Natural killer cell (primary cell): ENCODE measurements at regions of chr14 and their contacts with region 1.

Region 1: DNA sequence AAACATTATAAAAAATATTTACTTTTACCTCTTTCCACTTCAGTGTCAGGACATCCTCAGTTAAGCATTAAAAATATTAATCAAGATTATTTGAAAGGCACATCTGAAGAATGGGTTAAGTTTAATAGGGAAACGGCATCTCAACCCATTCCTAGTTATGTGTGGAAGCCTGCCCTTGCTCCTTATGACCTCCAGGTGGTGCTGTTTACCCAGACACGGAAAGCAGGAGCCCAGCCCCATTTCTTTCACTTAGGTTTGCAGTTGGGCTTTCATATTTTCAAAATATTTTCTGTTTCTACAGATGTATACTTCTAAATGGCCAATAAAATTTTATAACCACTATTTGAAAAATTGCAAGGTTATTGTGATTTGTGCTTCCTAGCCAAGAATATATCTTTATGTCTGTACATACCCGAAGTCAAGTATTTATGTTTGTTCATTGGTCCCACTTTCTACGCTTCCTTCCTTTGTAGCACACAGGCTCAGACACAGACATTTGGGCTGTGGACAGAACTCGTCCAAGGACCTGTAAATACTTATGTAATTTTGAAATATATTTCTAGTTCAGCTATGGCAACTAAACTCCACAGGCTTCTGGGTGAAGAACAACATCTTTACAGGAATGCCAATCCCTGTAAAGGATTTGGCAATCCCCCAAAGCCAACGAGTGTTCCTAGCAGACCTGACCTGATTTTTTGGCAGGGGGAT is 247.1 kb downstream of the AKAP6 start:
- DNase-seq: peak in 1 of 2 donors; percentile 71
- ATAC-seq: peak in 2 of 3 donors; percentile 60 to 81
- H3K4me3 ChIP-seq: no peak overlapping the region
- H3K4me3 Mint-ChIP-seq: no peak overlapping the region
- H3K27ac ChIP-seq: no peak overlapping the region
- H3K27ac Mint-ChIP-seq: no peak overlapping the region
- H3K4me1 ChIP-seq: no peaks in the 10 kb centered on the region
- H3K4me1 Mint-ChIP-seq: no peaks in the 10 kb centered on the region
- H3K27me3 ChIP-seq: no peaks in the 10 kb centered on the region
- H3K27me3 Mint-ChIP-seq: no peaks in the 10 kb centered on the region
- CTCF ChIP-seq: peak; percentile 78

Region 2: DNA sequence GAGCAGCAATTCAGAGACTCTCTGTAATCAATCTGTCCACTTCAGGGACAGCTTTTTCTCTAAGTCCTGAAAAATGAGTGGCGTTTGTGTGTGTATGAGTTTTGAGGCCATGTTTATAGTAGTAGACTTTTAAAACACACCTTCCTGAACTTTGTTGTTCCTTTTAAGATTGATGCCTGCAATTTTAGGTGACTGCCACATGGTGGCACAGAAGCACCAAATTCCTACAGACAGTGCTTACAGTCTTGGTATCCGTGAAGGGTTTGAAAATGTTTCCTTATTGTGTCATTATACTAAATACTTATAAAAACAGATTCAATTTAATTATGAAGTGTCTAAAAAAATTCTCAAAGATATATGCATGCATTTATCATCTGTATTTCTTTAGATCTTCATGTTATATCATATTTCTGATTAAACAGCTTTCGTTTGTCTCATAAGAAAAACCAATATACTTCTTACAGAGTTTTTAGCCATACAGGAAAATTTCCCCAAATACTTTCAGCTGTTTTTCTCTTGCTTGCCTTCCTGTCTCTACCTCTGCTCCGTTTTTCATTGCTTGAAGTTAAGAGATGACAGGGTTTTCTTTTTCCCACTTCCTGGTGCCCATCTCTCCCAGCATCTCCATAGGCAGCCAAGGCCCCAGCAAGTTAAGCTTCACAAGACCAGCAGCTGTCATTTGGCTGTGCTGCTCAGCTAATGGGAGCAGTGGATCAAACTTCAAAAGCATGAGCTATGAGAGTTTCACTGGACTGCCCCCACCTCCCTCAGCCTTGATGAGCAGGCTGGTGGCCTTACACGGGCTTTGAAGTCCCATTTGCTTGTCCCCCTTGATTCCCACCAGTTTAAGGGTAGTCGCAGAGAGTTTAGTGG is 12.4 kb after region 1 on chr14:
- intact Hi-C with region 1: no loop called
- DNase-seq: no peak
- ATAC-seq: no peak
- H3K4me3 ChIP-seq: no peak overlapping the region
- H3K4me3 Mint-ChIP-seq: no peak overlapping the region
- H3K27ac ChIP-seq: no peak overlapping the region
- H3K27ac Mint-ChIP-seq: no peak overlapping the region
- H3K4me1 ChIP-seq: no peaks in the 10 kb centered on the region
- H3K4me1 Mint-ChIP-seq: no peaks in the 10 kb centered on the region
- H3K27me3 ChIP-seq: no peaks in the 10 kb centered on the region
- H3K27me3 Mint-ChIP-seq: peaks cover 0 to 4% of the 10 kb centered on the region in 2 donors
- CTCF ChIP-seq: no peak

Region 3: DNA sequence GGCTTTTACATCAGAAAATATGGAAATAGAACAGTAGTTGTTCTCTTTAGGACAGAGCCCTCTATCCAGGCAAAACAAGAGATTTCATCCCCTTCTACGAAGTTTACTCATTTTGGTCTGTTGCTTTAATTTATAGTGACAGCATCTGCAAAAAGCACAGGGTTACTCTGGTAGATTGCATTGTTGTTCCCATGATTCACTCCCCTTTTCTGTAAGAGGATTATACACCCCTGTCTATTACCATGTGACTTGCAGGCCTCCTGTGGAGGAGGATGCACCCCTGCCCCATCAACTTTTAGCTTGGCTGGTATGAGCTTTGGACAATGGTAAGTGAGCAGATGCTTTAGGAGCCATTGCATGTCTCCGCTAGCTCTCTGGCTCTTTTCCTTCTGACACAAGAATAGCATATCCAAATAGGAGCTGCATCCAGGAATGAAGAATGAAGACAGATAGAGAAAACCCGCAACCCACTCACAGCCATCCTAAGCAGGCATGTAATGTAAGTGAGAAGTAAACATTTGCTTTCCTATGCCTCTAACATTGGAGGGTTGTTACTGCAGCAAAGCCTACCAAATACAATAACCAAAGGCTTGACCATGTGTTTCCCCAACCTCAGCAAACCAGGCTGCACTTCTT is 57.1 kb after region 1 on chr14:
- intact Hi-C with region 1: no loop called
- DNase-seq: no peak
- ATAC-seq: no peak
- H3K4me3 ChIP-seq: no peak overlapping the region
- H3K4me3 Mint-ChIP-seq: no peak overlapping the region
- H3K27ac ChIP-seq: no peak overlapping the region
- H3K27ac Mint-ChIP-seq: no peak overlapping the region
- H3K4me1 ChIP-seq: no peaks in the 10 kb centered on the region
- H3K4me1 Mint-ChIP-seq: no peaks in the 10 kb centered on the region
- H3K27me3 ChIP-seq: no peaks in the 10 kb centered on the region
- H3K27me3 Mint-ChIP-seq: no peaks in the 10 kb centered on the region
- CTCF ChIP-seq: no peak

Region 4: GRCh38 chr14:33229269-33229929 is 653.2 kb after region 1 on chr14:
- intact Hi-C with region 1: no loop called
- DNase-seq: no peak
- ATAC-seq: no peak
- H3K4me3 ChIP-seq: no peak overlapping the region
- H3K4me3 Mint-ChIP-seq: no peak overlapping the region
- H3K27ac ChIP-seq: no peak overlapping the region
- H3K27ac Mint-ChIP-seq: no peak overlapping the region
- H3K4me1 ChIP-seq: no peaks in the 10 kb centered on the region
- H3K4me1 Mint-ChIP-seq: no peaks in the 10 kb centered on the region
- H3K27me3 ChIP-seq: no peaks in the 10 kb centered on the region
- H3K27me3 Mint-ChIP-seq: no peaks in the 10 kb centered on the region
- CTCF ChIP-seq: no peak

Region 5: DNA sequence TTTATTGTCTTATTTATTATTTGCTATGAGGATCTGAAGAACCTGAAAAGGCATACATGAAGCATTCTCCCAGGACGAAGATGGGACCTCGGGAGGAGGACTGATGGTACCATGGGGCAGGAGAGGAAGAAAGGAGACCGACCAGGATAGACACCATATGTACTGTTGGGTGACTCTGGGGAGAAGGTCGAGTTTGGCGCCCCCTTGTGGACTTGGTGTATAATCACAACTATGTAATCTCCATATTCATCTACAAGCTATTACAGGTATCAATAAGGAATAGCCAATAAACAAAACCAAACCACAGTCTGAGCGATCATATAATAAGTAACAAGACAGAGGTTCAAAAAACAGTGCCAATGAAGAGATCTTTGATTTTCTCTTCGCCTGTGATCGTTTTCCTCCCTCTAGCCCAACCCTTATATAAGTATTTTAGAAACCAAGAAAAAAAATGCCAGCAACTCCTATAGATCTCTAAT is 1746.7 kb after region 1 on chr14:
- intact Hi-C with region 1: loop called (anchors 2 kb)
- DNase-seq: peak; percentile 50 to 83
- ATAC-seq: peak; percentile 63 to 79 (median 79)
- H3K4me3 ChIP-seq: no peak overlapping the region
- H3K4me3 Mint-ChIP-seq: peak overlapping the region; percentile 19
- H3K27ac ChIP-seq: no peak overlapping the region
- H3K27ac Mint-ChIP-seq: no peak overlapping the region
- H3K4me1 ChIP-seq: no peaks in the 10 kb centered on the region
- H3K4me1 Mint-ChIP-seq: peaks cover 0 to 12% of the 10 kb centered on the region in 2 donors
- H3K27me3 ChIP-seq: no peaks in the 10 kb centered on the region
- H3K27me3 Mint-ChIP-seq: peaks cover 3 to 8% of the 10 kb centered on the region in 2 donors
- CTCF ChIP-seq: peak; percentile 80